CD8-positive, alpha-beta memory T cell (primary cell): ENCODE measurements at regions of chr6 and their contacts with region 1.

Region 1: DNA sequence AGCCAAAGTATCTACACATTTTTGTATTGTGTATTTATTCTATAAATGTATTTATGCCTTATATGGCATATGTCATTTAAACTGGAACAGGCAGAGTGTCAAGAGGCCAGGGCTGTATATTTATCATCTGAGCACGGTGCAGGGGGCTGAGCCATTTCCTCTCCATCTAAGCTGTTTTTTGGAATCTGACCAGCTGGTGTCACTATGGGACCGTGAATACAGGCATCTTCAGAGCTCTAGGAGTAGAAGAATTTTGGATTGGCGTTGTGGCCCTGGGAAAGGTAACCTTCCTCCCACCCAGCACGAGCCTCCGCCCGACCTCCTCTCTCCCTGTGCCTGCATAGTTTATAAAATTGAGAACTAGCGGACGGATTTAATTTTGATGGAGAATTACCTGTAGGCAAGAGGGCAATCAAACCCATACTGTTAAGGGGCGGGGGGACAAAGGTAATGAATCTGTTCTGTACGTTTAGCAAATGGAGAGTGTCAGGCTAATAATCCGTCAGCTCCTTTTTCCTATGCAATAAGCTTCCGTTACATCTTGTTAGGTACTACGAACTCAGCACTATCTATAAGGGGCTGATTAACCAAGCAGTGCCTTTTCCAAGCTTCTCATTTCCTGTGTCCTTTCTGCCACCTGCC is 29.0 kb upstream of the EEF1E1 start:
- DNase-seq: peak in 1 of 5 donors; percentile 28
- H3K4me3 ChIP-seq: no peak overlapping the region
- H3K4me3 Mint-ChIP-seq: no peak overlapping the region
- H3K27ac ChIP-seq: no peak overlapping the region
- H3K27ac Mint-ChIP-seq: no peak overlapping the region
- H3K4me1 ChIP-seq: no peaks in the 10 kb centered on the region
- H3K4me1 Mint-ChIP-seq: no peaks in the 10 kb centered on the region
- H3K27me3 ChIP-seq: peaks cover 4% of the 10 kb centered on the region
- H3K27me3 Mint-ChIP-seq: peaks cover 22 to 39% of the 10 kb centered on the region in 2 donors

Region 2: GRCh38 chr6:8219352-8219943 is 88.1 kb after region 1 on chr6:
- CTCF ChIA-PET with region 1: interaction called, 28 read pairs
- POLR2A ChIA-PET with region 1: no interaction called
- DNase-seq: peak in 3 of 5 donors; percentile 1 to 12 (median 6)
- H3K4me3 ChIP-seq: no peak overlapping the region
- H3K4me3 Mint-ChIP-seq: no peak overlapping the region
- H3K27ac ChIP-seq: no peak overlapping the region
- H3K27ac Mint-ChIP-seq: no peak overlapping the region
- H3K4me1 ChIP-seq: no peaks in the 10 kb centered on the region
- H3K4me1 Mint-ChIP-seq: no peaks in the 10 kb centered on the region
- H3K27me3 ChIP-seq: no peaks in the 10 kb centered on the region
- H3K27me3 Mint-ChIP-seq: peaks cover 8 to 15% of the 10 kb centered on the region in 2 donors

Region 3: DNA sequence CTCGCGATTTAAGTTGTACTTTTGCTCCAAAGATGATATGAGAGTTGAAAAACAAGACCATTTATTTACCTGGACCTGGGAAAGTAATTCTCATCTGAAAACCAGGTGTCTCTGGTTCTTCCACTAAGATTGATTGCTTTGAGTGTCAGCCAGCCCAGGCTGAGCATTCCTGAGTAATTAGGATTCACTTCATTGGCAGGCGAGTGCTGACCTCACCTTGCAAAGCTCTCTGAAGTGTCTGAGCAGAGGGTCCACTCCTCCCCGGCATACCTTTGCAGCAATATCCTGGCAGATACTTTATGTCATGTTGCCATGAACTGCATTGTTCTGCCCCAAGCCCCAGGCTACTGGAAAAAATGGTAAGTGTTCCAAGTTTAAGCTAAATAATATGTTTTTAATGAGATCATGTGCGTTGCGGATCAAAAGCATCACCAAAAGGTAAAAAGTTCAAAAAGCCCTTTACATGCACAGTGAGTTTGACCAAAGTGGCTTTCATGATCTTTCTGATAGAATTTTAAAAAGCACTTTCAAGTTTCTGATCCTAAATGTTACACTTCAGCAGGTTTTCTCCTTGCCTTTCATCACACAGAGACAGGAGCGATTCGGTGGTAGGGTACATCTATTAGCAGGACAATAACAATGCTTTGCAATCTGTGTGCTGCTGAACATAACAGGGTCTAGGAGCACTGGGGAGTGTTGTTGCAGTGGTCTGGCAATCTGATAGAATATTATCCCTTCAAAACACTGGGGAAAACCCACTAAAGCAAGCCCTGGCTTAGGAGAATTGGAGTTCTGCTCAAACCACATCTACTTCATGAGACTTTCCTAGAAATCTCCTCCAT is 98.8 kb after region 1 on chr6:
- CTCF ChIA-PET with region 1: no interaction called
- POLR2A ChIA-PET with region 1: no interaction called
- DNase-seq: no peak
- H3K4me3 ChIP-seq: no peak overlapping the region
- H3K4me3 Mint-ChIP-seq: no peak overlapping the region
- H3K27ac ChIP-seq: no peak overlapping the region
- H3K27ac Mint-ChIP-seq: peak overlapping the region in 1 of 8 donors; percentile 39
- H3K4me1 ChIP-seq: no peaks in the 10 kb centered on the region
- H3K4me1 Mint-ChIP-seq: no peaks in the 10 kb centered on the region
- H3K27me3 ChIP-seq: no peaks in the 10 kb centered on the region
- H3K27me3 Mint-ChIP-seq: peaks cover 2 to 21% of the 10 kb centered on the region in 2 donors